ENCODE measurements at regions of chr16 and their contacts with region 1.

Region 1: GRCh38 chr16:30091474-30092372 is at the start of gene TBX6:
- DNase-seq: peak; percentile 97

Region 2: GRCh38 chr16:30065143-30065850 is 26.4 kb before region 1 on chr16 and contains the start of gene ALDOA:
- CTCF ChIA-PET with region 1: interaction called, 25 read pairs
- POLR2A ChIA-PET with region 1: interaction called, 155 read pairs
- DNase-seq: peak; percentile 98

Region 3: GRCh38 chr16:30104494-30104968 is 12.8 kb after region 1 on chr16:
- CTCF ChIA-PET with region 1: interaction called, 19 read pairs
- POLR2A ChIA-PET with region 1: interaction called, 15 read pairs
- DNase-seq: no peak

Region 4: GRCh38 chr16:30183233-30184095 is 91.7 kb after region 1 on chr16 and contains the start of gene CORO1A:
- CTCF ChIA-PET with region 1: interaction called, 8 read pairs
- POLR2A ChIA-PET with region 1: interaction called, 12 read pairs
- DNase-seq: peak; percentile 89